ENCODE measurements at regions of chr13 and their contacts with region 1.

Region 1: DNA sequence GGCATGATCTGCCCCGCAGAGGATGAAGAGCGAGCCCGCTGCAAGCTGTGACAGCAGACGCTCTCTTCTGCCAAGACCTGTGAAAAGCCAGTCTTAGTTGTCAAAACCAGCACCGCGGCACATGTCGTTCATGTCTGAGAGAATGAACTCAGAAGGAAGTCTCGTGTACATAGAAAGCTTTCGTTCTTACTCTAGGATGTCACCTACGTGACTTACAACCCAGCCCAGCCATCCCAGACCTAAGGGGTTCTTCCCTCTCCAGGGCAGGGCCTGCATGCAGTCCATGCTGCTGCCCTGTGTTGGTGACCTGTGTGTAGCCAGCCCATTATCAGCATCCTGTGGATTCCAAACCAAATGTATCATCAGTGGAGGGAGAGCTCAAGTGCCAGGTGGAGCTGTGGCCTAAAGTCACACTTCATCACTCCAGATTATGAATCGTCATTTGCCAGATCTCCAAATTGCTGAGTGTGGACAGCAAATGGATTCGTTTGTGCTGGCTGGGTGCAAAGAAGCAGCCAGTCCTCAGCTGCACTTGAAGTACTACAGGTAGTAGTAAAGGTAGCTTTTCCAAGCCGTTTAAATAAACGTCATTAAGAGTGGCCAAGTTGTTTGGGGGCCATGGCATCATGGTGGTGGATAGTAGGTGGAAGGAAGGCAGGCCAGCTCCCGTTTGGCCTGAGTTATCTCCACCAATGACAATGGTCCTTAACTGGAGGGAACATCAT is 73.9 kb upstream of the GPR183 start:
- DNase-seq: peak; percentile 62
- H3K4me3 Mint-ChIP-seq: peak overlapping the region; percentile 27
- H3K27ac Mint-ChIP-seq: peak overlapping the region; percentile 82
- H3K4me1 Mint-ChIP-seq: peaks cover 80% of the 10 kb centered on the region
- H3K27me3 Mint-ChIP-seq: no peaks in the 10 kb centered on the region

Region 2: DNA sequence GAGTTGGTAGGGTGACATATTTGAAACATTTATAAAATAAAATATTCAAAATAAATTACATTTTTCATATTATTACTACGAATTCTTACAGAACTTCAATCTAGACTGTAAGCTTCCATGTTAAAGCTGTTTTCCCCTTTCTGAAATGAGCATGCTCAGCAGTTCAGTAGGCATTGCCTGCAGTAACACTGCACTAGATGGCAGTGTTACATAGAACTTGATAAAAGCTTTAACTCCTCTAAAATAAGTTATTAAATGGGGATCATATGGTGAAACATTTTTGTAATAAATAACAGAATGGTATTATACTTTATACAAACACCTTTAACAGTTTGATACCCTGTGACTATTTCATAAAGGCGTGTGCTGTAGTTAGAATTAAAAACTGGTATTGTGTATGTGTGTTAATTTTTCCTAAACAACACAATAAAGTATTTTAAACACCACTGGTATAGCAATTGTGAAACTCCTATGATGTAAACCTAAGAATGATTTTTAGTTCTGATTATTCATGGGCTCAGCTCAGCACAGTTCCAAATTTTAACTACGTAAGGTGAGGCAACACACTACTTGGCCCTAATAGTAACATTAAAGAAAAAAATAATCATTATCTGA is 111.3 kb before region 1 on chr13:
- intact Hi-C with region 1: loop called (anchors 2 kb)
- DNase-seq: no peak
- H3K4me3 Mint-ChIP-seq: no peak overlapping the region
- H3K27ac Mint-ChIP-seq: no peak overlapping the region
- H3K4me1 Mint-ChIP-seq: peaks cover 54% of the 10 kb centered on the region
- H3K27me3 Mint-ChIP-seq: no peaks in the 10 kb centered on the region

Region 3: GRCh38 chr13:99307648-99308339 is 73.3 kb before region 1 on chr13:
- intact Hi-C with region 1: loop called (anchors 2 kb)
- DNase-seq: peak; percentile 64
- H3K4me3 Mint-ChIP-seq: peak overlapping the region; percentile 98
- H3K27ac Mint-ChIP-seq: peak overlapping the region; percentile 89
- H3K4me1 Mint-ChIP-seq: peaks cover 66% of the 10 kb centered on the region
- H3K27me3 Mint-ChIP-seq: no peaks in the 10 kb centered on the region

Region 4: GRCh38 chr13:99367663-99368448 is 13.2 kb before region 1 on chr13:
- intact Hi-C with region 1: loop called (anchors 1 kb)
- DNase-seq: no peak
- H3K4me3 Mint-ChIP-seq: peak overlapping the region; percentile 43
- H3K27ac Mint-ChIP-seq: peak overlapping the region; percentile 56
- H3K4me1 Mint-ChIP-seq: peaks cover 73% of the 10 kb centered on the region
- H3K27me3 Mint-ChIP-seq: no peaks in the 10 kb centered on the region

Region 5: GRCh38 chr13:99585609-99586008 is 204.5 kb after region 1 on chr13:
- intact Hi-C with region 1: no loop called
- DNase-seq: no peak
- H3K4me3 Mint-ChIP-seq: no peak overlapping the region
- H3K27ac Mint-ChIP-seq: no peak overlapping the region
- H3K4me1 Mint-ChIP-seq: no peaks in the 10 kb centered on the region
- H3K27me3 Mint-ChIP-seq: peaks cover 9% of the 10 kb centered on the region

Measured in activated T-helper 2 cell treated with anti-CD3 and anti-CD28 coated beads, Interferon-gamma antibody, Interleukin-2, Interleukin-4, amounts not matched to agents 10 μg/mL and 5 μg/mL and 100 μg/mL, durations not matched to agents 14 hours and 24 hours and 36 hours (primary cell).